Right ventricle myocardium inferior (tissue), 1 donor: ENCODE measurements at regions of chr1 and their contacts with region 1.

Region 1: GRCh38 chr1:21659099-21659923 is 9.8 kb downstream of the RAP1GAP start:
- DNase-seq: peak; percentile 94
- ATAC-seq: peak; percentile 73

Region 2: GRCh38 chr1:21232044-21232443 is 427.3 kb before region 1 on chr1:
- intact Hi-C with region 1: loop called (anchors 10 kb)
- DNase-seq: no peak
- ATAC-seq: peak; percentile 59

Region 3: GRCh38 chr1:21508580-21509350 is 150.5 kb before region 1 on chr1:
- intact Hi-C with region 1: loop called (anchors 5 kb)
- DNase-seq: peak; percentile 90
- ATAC-seq: peak; percentile 81